Activated CD4-positive, alpha-beta T cell treated with anti-CD3 and anti-CD28 coated beads, Interleukin-2, amount 10 ng/mL, durations not matched to agents 24 days and 14 days (primary cell): ENCODE measurements at regions of chr3 and their contacts with region 1.

Region 1: DNA sequence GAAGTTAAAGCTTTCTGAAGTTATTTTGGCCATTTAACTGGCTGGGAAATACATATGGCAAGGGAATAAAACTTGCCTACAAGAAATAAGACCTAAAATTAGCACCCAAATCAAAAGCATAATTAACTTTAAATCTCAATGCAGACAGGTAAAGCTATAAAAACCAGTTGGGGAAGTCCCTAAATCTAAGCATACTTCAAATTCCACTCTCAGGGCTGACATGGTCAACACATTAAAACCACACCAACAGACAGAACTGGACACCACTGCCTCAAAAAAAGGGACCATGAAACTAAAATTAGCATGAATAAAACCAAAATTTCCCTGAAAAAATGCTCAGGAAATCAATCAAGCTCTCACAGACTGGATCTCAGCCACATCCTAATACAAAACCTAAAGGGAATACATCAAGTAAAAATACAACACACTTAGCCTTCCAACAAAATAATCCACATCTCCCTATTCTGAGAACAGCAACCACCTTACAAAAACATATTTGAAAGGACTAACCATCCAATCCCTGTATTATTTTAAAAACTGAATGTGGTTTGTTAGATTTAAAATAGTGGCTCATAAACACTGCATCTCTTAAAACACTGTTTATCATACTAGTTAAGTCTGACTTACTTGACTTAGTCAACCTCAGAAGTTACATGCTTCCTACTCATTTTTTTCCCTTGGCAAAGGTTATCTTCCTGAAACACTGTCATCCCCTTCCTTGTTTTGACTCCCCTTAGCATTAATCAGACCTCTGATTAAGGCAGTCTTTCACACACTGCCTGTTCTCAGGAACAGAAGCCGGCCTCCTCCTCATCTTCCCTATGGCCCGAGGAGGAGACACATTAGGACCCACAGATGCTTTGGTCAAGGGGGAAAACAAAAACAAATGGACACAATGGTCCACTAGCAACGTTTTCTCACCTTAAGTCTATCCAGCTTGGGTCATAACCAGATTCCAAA is 8.3 kb downstream of the TRA2B start:
- DNase-seq: no peak
- H3K4me3 Mint-ChIP-seq: peak overlapping the region; percentile 98
- H3K27ac Mint-ChIP-seq: peak overlapping the region; percentile 87
- H3K4me1 Mint-ChIP-seq: peaks cover 86% of the 10 kb centered on the region
- H3K27me3 Mint-ChIP-seq: no peaks in the 10 kb centered on the region

Region 2: GRCh38 chr3:185807445-185808068 is 121.9 kb before region 1 on chr3:
- intact Hi-C with region 1: no loop called
- DNase-seq: no peak
- H3K4me3 Mint-ChIP-seq: no peak overlapping the region
- H3K27ac Mint-ChIP-seq: no peak overlapping the region
- H3K4me1 Mint-ChIP-seq: no peaks in the 10 kb centered on the region
- H3K27me3 Mint-ChIP-seq: peaks cover 22% of the 10 kb centered on the region

Region 3: GRCh38 chr3:185824476-185825378 is 104.7 kb before region 1 on chr3 and contains the start of gene IGF2BP2:
- intact Hi-C with region 1: loop called (anchors 2 kb)
- DNase-seq: peak; percentile 87
- H3K4me3 Mint-ChIP-seq: peak within 1 kb of the TSS; percentile 86
- H3K27ac Mint-ChIP-seq: peak within 1 kb of the TSS; percentile 68
- H3K4me1 Mint-ChIP-seq: peaks cover 13% of the 10 kb centered on the region
- H3K27me3 Mint-ChIP-seq: peaks cover 72% of the 10 kb centered on the region
- total RNA-seq, gene IGF2BP2: 0.64 and 0.89 TPM in 2 replicates

Region 4: DNA sequence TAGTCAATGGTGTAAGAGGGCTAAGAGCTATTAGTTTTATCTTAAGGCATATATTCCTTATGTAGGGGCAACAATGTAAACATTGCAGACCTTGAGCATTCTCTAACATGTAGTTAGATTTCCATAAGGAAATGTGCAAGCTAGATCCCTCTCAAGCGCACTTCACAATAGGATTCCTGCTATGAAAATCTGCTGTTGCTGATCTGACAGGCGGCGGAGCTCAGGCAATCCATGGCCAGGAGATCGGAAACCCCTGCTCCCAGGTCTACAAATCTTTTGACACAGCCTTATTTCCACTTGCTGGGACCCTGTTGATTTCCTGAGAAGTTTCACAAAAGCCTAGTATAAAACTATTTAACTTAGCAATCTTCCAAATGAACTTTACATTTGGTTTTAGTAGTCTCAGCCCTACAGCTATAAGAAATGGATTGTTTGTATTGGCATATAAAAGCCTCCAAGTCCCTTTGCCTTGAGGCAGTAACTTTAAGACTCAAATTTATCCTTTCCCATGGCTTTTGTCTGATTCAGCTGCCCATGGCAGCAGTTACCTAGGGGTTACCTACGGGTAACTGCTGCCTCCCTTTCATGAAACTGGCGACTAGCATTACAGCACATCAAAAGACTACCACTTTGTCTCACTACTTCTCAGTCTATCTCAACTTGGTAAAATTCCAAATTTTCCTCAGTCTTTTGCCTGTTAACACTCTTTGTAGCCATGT is 14.4 kb before region 1 on chr3:
- intact Hi-C with region 1: loop called (anchors 2 kb)
- DNase-seq: no peak
- H3K4me3 Mint-ChIP-seq: no peak overlapping the region
- H3K27ac Mint-ChIP-seq: no peak overlapping the region
- H3K4me1 Mint-ChIP-seq: peaks cover 2% of the 10 kb centered on the region
- H3K27me3 Mint-ChIP-seq: no peaks in the 10 kb centered on the region